Heart left ventricle (tissue), 16 donors: ENCODE measurements at regions of chr11 and their contacts with region 1.

Region 1: GRCh38 chr11:64877879-64878493 is 435 bp downstream of the EHD1 start:
- DNase-seq: no peak
- ATAC-seq: peak; percentile 1 to 38 (median 16)
- H3K4me3 ChIP-seq: peak overlapping the region; percentile 66 to 98 (median 88)
- H3K27ac ChIP-seq: peak overlapping the region; percentile 69 to 97 (median 90)
- H3K4me1 ChIP-seq: peaks cover 2 to 73% (median 61%) of the 10 kb centered on the region in 12 donors
- H3K27me3 ChIP-seq: no peaks in the 10 kb centered on the region
- CTCF ChIP-seq: no peak
- POLR2A ChIP-seq: no peak

Region 2: DNA sequence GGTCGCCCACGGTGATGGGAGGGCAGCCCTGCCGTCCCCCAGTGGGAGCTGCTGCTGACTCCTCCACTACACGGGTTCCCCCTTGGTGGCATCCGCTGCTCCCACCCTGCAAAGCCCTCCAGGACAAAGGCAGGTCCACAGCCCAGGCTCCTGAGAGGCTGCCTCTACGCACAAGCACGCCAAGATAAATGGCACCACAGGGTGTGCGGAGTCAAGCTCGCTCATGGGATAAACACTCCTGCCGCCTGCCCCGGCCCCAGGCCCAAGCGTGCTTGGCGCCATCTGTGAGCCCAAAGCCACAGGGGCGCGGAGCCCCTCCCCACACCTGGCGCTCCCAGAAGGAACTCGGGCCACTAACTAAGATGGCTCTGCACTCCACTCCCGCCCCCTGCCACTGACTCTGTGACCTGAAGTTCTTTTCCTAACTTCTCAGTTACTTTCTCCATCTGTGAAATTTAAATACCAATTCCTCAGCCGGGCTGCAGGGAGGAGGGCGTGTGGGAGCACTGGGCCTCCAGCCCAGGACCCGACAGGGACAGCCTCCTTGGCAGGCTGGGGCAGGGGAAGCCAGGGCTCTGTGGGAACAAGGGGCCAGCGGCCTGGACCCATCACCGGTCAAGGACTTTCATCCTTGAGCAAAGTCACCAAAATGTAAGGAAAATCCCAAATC is 14.5 kb before region 1 on chr11:
- intact Hi-C with region 1: loop called in 1 of 10 experiments (anchors 2 kb)
- DNase-seq: peak in 3 of 5 donors; percentile 41 to 71 (median 63)
- ATAC-seq: peak in 3 of 4 donors; percentile 43 to 53 (median 47)
- H3K4me3 ChIP-seq: peak overlapping the region in 8 of 12 donors; percentile 3 to 40 (median 23)
- H3K27ac ChIP-seq: peak overlapping the region; percentile 77 to 99 (median 92)
- H3K4me1 ChIP-seq: peaks cover 52 to 99% (median 79%) of the 10 kb centered on the region in 12 donors
- H3K27me3 ChIP-seq: no peaks in the 10 kb centered on the region
- CTCF ChIP-seq: no peak
- POLR2A ChIP-seq: no peak

Region 3: GRCh38 chr11:65040847-65041621 is 163.0 kb after region 1 on chr11 and contains the start of gene SAC3D1:
- intact Hi-C with region 1: no loop called
- DNase-seq: peak; percentile 89 to 94 (median 93)
- ATAC-seq: peak; percentile 91 to 97 (median 96)
- H3K4me3 ChIP-seq: peak within 1 kb of the TSS; percentile 63 to 92 (median 78)
- H3K27ac ChIP-seq: peak within 1 kb of the TSS; percentile 86 to 98 (median 94)
- H3K4me1 ChIP-seq: peaks cover 0 to 37% (median 16%) of the 10 kb centered on the region in 12 donors
- H3K27me3 ChIP-seq: no peaks in the 10 kb centered on the region
- CTCF ChIP-seq: no peak
- POLR2A ChIP-seq: peak in 1 of 2 donors; percentile 55
- total RNA-seq, gene SAC3D1: 4.3 to 9.1 (median 6.2) TPM

Region 4: DNA sequence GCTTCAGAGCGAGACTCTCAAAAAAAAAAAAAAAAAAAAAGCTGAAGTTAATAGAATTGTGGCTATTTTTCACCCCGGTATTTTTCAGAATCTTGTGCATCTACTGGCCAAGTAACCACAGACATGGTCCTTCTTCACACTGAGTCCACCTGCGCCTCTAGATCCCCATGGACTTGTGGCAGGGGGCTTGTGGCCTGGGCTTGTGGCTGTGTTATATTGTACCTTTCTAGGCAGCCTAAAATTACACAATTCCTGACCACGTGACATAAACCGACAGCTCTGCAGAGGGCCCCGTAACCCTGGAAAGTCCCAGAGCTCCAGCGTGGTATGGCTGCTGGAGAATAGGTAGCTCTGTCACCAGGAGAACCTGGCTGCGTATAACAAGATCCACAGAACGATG is 191.2 kb after region 1 on chr11:
- intact Hi-C with region 1: no loop called
- DNase-seq: no peak
- ATAC-seq: no peak
- H3K4me3 ChIP-seq: no peak overlapping the region
- H3K27ac ChIP-seq: no peak overlapping the region
- H3K4me1 ChIP-seq: no peaks in the 10 kb centered on the region
- H3K27me3 ChIP-seq: no peaks in the 10 kb centered on the region
- CTCF ChIP-seq: no peak
- POLR2A ChIP-seq: no peak